Transverse colon (tissue), 4 donors: ENCODE measurements at regions of chr2 and their contacts with region 1.

Region 1: GRCh38 chr2:100882645-100883613 is 63.0 kb downstream of the NPAS2 start:
- DNase-seq: peak; percentile 46
- H3K4me3 ChIP-seq: no peak overlapping the region
- H3K27ac ChIP-seq: no peak overlapping the region
- H3K4me1 ChIP-seq: peaks cover 2 to 24% (median 8%) of the 10 kb centered on the region in 4 donors
- H3K27me3 ChIP-seq: no peaks in the 10 kb centered on the region
- CTCF ChIP-seq: no peak
- EP300 ChIP-seq: no peak
- POLR2A ChIP-seq: no peak

Region 2: GRCh38 chr2:99970292-99970868 is 912.5 kb before region 1 on chr2:
- in situ Hi-C with region 1: no loop called
- intact Hi-C with region 1: no loop called
- DNase-seq: no peak
- H3K4me3 ChIP-seq: no peak overlapping the region
- H3K27ac ChIP-seq: no peak overlapping the region
- H3K4me1 ChIP-seq: no peaks in the 10 kb centered on the region
- H3K27me3 ChIP-seq: no peaks in the 10 kb centered on the region
- CTCF ChIP-seq: no peak
- EP300 ChIP-seq: no peak
- POLR2A ChIP-seq: no peak

Region 3: DNA sequence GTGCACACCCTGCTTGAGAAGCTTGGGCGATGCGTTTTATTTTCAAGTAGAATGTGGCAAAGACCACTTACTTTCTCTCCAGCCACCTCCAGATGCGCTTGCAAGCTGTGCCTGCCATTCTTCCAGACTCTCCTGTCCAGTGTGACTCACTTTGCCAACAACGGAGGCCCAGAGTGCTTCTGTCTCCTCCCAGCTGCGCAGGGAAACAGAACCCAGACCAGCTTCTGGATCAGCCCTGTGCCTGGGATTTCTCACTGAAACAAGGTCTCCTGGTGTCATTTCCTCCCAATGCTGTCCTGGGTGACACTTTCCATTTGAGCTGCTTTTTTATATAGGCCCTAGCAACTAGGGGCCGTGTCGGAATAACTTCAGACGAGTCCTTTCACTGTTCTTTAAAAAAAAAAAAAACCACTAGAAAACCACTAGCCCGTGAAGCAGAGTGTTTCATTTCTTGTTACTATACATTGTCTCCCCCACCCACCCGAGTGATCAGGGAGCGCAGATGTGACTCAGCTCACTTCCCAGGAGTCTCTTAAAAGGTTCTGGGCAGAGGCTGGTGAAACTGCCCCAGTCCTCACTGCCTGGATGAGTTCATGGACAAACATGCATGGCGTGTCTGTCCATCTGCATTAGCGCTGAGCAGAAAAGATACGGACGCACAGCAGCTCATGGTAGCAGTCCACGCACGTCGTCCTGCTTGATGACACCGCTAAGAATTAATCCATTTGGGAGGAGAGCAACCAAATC is 93.9 kb after region 1 on chr2:
- in situ Hi-C with region 1: no loop called
- intact Hi-C with region 1: loop called (anchors 10 kb)
- DNase-seq: no peak
- H3K4me3 ChIP-seq: no peak overlapping the region
- H3K27ac ChIP-seq: peak overlapping the region in 3 of 4 donors; percentile 7 to 54 (median 43)
- H3K4me1 ChIP-seq: peaks cover 0 to 6% (median 0%) of the 10 kb centered on the region in 4 donors
- H3K27me3 ChIP-seq: no peaks in the 10 kb centered on the region
- CTCF ChIP-seq: no peak
- EP300 ChIP-seq: no peak
- POLR2A ChIP-seq: no peak

Region 4: DNA sequence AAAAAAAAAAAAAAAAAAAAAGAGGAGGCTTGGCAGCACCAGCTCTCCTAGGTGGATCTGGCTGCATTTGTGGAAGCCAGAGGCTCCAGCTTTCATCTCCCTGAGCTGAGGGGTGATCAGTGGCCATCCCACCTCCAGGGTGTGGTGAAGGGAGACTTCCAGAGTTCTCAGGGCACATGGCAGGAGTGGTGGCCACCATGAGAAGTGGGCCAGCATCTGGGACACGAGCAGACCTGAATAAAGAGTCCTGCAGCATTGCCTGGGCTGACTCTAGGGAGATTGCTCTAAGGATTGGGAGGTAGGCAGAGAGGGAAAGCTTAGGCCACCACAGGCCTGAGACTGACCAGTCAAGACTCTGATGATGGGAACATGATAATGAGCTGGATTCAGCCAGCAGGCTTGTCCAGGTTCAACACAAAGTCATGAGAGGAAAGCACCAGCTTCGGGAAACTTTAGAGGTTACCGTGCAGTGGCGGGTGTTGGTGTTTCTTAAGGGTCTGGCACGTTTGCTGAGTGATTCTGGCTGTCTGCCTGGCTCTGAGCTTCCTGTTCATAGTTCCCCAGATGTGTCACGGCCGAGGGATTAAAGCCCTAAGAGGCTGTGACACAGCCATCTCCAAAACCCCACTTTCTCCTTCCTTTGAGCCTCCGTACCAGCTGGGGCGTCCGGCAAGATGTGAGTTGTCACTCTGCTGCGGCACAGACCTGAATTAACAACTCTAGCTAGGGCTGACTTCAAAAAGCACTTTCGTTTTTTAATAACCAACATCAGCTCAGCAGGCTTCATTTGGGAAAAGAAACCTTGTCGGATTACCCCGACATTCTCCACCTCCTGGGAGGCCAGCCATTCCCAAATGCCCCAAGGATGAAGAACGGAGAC is 1221.3 kb after region 1 on chr2:
- in situ Hi-C with region 1: no loop called
- intact Hi-C with region 1: loop called (anchors 5 kb)
- DNase-seq: peak; percentile 70
- H3K4me3 ChIP-seq: peak overlapping the region in 3 of 4 donors; percentile 20 to 42 (median 21)
- H3K27ac ChIP-seq: peak overlapping the region; percentile 70 to 76 (median 72)
- H3K4me1 ChIP-seq: peaks cover 0 to 61% (median 34%) of the 10 kb centered on the region in 4 donors
- H3K27me3 ChIP-seq: no peaks in the 10 kb centered on the region
- CTCF ChIP-seq: no peak
- EP300 ChIP-seq: no peak
- POLR2A ChIP-seq: peak; percentile 13